ENCODE measurements at regions of chr2 and their contacts with region 1.

Region 1: DNA sequence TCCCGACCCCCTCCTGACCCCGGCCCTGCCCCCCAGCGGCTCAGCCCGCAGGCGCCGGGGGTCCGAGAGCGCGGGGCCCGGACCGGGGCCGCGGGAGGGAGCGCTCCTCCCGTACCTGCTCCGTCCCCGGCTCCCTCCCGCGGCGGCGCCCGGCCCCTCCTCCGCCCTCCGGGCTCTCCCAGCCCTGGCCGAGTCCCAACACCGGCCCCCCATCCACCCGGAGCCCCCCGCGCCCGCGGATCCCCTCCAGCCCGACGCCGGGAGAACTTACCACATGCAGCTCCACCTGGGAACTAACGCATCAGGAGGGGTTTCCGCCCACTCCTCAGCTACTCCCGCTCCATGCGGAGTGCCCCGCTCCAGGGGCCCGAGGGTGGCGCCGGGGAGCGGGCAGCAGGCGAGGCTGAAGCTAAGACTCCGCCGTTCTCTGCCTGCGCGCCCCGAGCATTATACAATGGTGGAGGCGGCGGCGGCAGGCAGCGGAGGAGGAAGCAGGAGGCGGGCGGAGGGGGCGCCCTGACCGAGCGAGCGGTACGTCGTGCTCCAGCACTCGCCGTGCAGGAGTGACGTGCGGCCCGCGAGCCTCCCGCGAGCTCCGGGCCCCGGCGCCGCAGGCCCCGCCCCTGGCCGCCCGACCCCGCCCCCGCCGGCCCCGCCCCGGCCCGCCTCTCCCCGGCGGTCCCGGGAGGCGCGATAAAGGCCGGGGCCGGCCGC is at the start of gene SERTAD2:
- H3K4me3 ChIP-seq: peak within 1 kb of the TSS; percentile 88
- H3K27ac ChIP-seq: peak within 1 kb of the TSS; percentile 98
- H3K4me1 ChIP-seq: peaks cover 9% of the 10 kb centered on the region
- CTCF ChIP-seq: peak; percentile 85; the same call in 1 of the 2 replicates

Region 2: DNA sequence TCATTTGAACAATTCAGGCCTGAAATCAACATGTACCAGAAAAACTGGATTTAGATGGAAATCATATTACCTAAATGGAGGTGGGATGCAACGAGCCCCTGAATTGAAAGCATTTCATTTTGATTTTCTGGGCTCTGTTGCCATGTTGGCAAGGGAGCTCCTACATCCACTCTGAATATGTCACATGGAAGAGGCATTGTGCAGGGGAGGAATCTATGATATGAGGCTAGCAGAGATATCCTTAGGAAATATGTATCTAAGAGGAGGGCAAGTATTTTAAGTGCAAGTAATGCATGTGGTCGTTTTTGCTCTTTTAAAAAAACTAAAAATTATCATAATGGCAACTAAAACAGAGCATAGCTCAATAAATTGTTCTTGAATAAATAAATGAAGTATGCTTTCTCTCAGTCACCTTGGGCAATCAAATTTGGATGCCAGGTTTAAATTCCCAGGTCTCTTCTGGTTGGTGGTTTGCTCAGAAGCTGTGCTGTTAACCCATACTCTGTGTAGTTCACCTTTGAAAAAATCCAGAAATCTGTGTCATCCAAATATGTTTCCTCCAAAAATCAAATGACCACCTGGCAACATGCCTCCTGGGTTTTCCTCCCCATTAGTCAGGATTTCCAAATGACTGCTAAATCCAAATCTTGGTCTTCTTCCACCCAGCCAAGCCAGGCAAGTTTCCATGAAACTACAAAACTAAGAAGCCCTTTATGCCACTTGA is 206.0 kb before region 1 on chr2:
- CTCF ChIA-PET with region 1: no interaction called
- POLR2A ChIA-PET with region 1: no interaction called
- H3K4me3 ChIP-seq: no peak overlapping the region
- H3K27ac ChIP-seq: no peak overlapping the region
- H3K4me1 ChIP-seq: peaks cover 3% of the 10 kb centered on the region; the same call in 1 of the 2 replicates
- CTCF ChIP-seq: no peak

Region 3: GRCh38 chr2:64543008-64543697 is 110.4 kb before region 1 on chr2:
- CTCF ChIA-PET with region 1: no interaction called
- POLR2A ChIA-PET with region 1: no interaction called
- H3K4me3 ChIP-seq: no peak overlapping the region
- H3K27ac ChIP-seq: no peak overlapping the region
- H3K4me1 ChIP-seq: peaks cover 5% of the 10 kb centered on the region; the same call in 1 of the 2 replicates
- CTCF ChIP-seq: no peak

Region 4: GRCh38 chr2:64558445-64559081 is 94.9 kb before region 1 on chr2:
- CTCF ChIA-PET with region 1: no interaction called
- POLR2A ChIA-PET with region 1: no interaction called
- H3K4me3 ChIP-seq: no peak overlapping the region
- H3K27ac ChIP-seq: no peak overlapping the region
- H3K4me1 ChIP-seq: peaks cover 13% of the 10 kb centered on the region
- CTCF ChIP-seq: no peak

Region 5: GRCh38 chr2:64666810-64667438 is 13.4 kb after region 1 on chr2:
- CTCF ChIA-PET with region 1: interaction called, 10 read pairs
- POLR2A ChIA-PET with region 1: interaction called, 12 read pairs
- H3K4me3 ChIP-seq: no peak overlapping the region
- H3K27ac ChIP-seq: no peak overlapping the region
- H3K4me1 ChIP-seq: 0 out of 2 replicates have a peak, but pooled peaks cover 3% of the 10 kb centered on the region
- CTCF ChIP-seq: no peak

Region 6: GRCh38 chr2:64686283-64686956 is 32.9 kb after region 1 on chr2:
- CTCF ChIA-PET with region 1: no interaction called
- POLR2A ChIA-PET with region 1: no interaction called
- H3K4me3 ChIP-seq: no peak overlapping the region
- H3K27ac ChIP-seq: no peak overlapping the region
- H3K4me1 ChIP-seq: no peaks in the 10 kb centered on the region
- CTCF ChIP-seq: no peak

Region 7: DNA sequence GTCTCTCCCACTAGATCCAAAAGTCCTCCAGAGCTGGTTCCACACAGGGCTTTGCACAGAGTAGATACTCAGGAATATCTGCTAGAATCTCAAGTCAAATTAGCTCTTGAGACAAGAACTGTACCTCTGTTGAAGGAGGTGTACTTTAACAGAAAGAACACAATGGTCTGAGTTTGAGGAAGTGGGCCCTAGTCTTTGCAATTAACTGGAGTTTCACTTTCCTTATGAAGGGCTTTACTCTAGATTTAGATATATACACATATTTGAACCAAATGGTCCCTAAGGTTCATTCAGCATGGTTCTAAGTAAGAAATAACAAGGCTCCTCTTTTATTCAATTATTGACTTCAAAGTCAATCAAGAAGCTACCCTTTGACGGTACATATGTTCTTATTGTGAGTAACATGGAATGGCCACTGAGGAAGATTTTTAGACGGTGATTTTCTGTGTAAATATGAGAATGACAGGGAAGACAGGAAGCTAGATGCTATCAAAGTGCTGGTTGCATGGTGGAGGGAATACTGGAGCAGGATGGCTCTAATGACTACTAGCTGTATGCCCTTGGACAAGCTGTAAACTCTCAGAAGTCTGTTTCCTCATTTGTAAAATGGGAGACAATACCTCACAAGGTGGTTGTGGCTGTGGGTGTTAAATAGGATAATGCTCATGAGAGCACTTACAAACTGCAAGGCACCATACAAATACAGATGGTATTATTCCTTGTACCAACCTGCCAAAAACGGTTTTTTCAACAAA is 73.7 kb after region 1 on chr2:
- CTCF ChIA-PET with region 1: interaction called, 3 read pairs
- POLR2A ChIA-PET with region 1: interaction called, 19 read pairs
- H3K4me3 ChIP-seq: no peak overlapping the region
- H3K27ac ChIP-seq: no peak overlapping the region
- H3K4me1 ChIP-seq: peaks cover 23% of the 10 kb centered on the region
- CTCF ChIP-seq: no peak

Region 8: GRCh38 chr2:64767670-64768468 is 114.4 kb after region 1 on chr2:
- CTCF ChIA-PET with region 1: interaction called, 3 read pairs
- POLR2A ChIA-PET with region 1: interaction called, 31 read pairs
- H3K4me3 ChIP-seq: peak overlapping the region; percentile 64
- H3K27ac ChIP-seq: peak overlapping the region; percentile 92
- H3K4me1 ChIP-seq: peaks cover 9% of the 10 kb centered on the region
- CTCF ChIP-seq: peak; percentile 59

Region 9: DNA sequence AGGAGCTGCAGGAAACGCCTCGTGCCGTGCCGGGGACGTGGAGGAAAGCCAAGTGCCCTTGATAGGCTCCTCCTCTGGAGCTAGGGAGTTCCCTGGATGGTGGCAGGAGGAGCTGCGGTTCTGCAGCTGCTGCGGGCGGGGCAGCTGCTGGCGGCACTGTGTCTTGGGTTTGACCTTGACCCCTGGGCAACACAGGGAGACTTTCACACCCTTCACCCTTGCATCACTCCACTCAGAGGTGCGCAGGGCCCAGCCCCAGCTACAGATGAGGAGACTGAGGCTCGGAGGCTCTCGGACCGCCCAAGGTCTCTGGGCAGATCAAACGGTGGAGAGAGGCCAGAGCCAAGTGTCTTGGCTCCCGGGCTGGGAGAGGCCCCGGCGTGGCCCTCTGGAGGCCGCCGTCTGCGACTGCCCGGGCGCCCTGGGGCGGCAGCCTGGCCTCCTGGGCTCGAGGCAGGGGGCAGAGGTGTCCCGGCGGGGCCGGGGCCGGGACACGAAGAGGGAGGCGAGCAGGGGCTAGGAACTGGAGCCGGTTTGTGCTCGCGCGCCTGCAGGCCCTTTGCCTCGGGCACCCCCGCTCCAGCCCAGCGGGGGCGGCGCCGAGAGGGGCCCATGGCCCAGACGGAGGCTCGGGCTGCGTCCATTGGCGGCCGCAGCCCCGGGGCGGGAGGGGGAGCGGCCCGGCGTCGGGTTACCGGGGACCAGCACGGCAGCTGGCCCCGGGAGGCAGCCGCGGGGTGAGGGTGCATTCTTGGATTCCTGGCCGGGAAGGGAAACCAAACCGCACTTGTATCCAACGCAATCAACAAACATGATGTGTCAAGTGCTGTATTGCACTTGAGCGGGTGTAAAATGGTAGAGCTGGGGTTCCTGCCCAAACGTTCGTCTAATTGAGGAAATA is 206.1 kb after region 1 on chr2:
- CTCF ChIA-PET with region 1: interaction called, 5 read pairs
- POLR2A ChIA-PET with region 1: interaction called, 14 read pairs
- H3K4me3 ChIP-seq: peak overlapping the region; percentile 3; the same call in 1 of the 2 replicates
- H3K27ac ChIP-seq: peak overlapping the region; percentile 60
- H3K4me1 ChIP-seq: peaks cover 4% of the 10 kb centered on the region; the same call in 1 of the 2 replicates
- CTCF ChIP-seq: peak; percentile 40; the same call in 1 of the 2 replicates

Measured in HEK293 (cell line).